ENCODE measurements at regions of chr14 and their contacts with region 1.

Region 1: GRCh38 chr14:102437997-102438915 is 71.3 kb downstream of the ANKRD9 start:
- DNase-seq: peak; percentile 11
- H3K4me3 ChIP-seq: no peak overlapping the region
- H3K27me3 ChIP-seq: no peaks in the 10 kb centered on the region
- CTCF ChIP-seq: peak; percentile 79

Region 2: DNA sequence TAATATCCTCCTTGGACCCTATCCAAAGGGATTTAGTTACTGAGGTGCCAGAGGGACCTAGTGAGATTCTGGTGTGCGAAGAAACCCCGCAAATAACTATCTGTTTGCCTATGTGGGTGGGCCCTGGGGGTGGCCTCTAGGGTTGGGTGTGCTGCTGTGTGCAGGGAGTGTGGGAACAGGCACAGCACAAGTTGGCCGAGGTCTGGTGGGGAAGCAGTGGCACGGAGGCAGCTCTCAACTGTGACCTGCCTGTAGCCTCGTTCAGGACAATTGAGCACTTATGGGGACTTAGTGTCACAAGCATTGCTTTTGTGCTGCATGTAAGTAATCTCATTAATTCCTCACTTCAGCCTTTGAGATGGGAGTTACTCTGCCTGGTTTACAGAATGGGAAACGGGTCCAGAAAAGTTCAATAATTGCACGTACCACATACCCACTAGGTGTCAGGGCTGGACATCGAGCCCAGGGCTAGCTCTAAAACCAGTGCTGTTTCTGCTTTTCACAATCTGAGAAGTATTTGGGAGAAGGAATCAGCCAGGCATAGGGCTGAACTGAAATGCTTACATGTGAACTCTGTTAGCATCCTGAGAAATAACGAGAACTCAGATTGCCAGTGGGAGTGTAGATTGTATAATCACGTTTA is 16.7 kb before region 1 on chr14:
- CTCF ChIA-PET with region 1: interaction called, 16 read pairs
- POLR2A ChIA-PET with region 1: no interaction called
- DNase-seq: no peak
- H3K4me3 ChIP-seq: no peak overlapping the region
- H3K27me3 ChIP-seq: no peaks in the 10 kb centered on the region
- CTCF ChIP-seq: no peak

Region 3: DNA sequence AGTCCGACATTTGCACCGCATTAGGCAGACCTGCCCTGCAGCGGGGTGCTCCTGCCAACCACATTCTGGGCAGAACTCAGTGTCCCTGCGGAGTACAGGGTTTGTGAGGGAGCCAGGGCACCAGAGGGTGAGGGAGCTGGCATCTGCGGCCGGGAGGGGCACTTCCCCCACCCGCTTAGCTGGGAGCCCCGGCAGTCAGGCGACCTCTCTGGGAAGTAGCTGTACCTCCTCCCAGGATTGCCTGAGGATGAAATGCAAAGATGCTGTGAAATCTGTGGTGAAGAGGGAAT is 12.8 kb after region 1 on chr14:
- CTCF ChIA-PET with region 1: interaction called, 20 read pairs
- POLR2A ChIA-PET with region 1: no interaction called
- DNase-seq: no peak
- H3K4me3 ChIP-seq: no peak overlapping the region
- H3K27me3 ChIP-seq: no peaks in the 10 kb centered on the region
- CTCF ChIP-seq: no peak

Region 4: DNA sequence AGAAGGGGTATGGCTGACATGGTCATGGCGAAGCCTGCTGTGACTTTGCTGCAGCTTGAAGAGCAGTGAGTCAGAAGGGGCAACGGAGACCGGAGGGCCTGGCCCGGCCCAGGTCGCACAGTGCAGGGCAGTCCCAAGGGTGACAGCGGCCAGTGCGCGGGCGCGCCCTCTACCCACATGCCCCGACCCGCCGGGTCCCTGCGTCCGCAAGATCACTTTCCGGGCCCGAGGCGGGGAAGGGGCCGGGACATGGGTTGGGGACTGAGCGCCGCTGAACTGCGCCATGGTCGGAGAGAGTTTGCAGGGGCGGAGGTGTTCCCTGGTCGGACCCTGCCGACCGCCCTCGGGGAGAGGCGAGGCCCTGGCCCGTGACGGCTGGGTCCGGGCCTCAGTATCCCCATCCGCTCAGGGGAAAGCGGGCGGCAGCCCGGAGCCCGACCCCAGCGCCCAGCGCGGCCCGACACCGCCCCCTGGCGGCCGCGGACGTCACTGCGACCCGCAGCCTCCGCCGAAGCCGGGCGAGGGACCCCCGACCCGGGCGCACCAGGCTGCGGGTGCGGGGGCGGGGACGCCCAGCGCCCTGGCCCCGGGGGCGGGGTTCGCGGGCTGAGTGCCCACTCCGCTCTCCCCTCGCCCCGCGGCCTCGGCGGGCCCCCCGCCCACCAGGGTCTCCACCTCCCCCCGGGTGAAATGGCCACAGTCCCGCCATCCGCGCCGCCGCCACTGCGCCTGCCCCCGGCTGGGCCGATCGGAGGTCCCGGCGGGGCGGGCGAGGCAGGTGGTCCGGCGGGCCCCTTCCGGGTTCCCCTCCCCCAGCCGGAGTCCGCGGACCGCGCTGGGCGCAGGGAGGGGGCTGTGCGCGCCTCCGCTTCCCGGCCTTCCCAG is 78.5 kb after region 1 on chr14:
- CTCF ChIA-PET with region 1: interaction called, 42 read pairs
- POLR2A ChIA-PET with region 1: no interaction called
- DNase-seq: no peak
- H3K4me3 ChIP-seq: peak overlapping the region; percentile 64
- H3K27me3 ChIP-seq: no peaks in the 10 kb centered on the region
- CTCF ChIP-seq: peak; percentile 19; the same call in 1 of the 2 replicates

Region 5: GRCh38 chr14:102524466-102525218 is 86.4 kb after region 1 on chr14:
- CTCF ChIA-PET with region 1: interaction called, 20 read pairs
- POLR2A ChIA-PET with region 1: no interaction called
- DNase-seq: peak; percentile 90
- H3K4me3 ChIP-seq: peak overlapping the region; percentile 73
- H3K27me3 ChIP-seq: no peaks in the 10 kb centered on the region
- CTCF ChIP-seq: peak; percentile 99